Posterior vena cava (tissue), 2 donors: ENCODE measurements at regions of chr9 and their contacts with region 1.

Region 1: GRCh38 chr9:108672475-108673190 is 183.2 kb downstream of the ACTL7B start:
- DNase-seq: no peak

Region 2: DNA sequence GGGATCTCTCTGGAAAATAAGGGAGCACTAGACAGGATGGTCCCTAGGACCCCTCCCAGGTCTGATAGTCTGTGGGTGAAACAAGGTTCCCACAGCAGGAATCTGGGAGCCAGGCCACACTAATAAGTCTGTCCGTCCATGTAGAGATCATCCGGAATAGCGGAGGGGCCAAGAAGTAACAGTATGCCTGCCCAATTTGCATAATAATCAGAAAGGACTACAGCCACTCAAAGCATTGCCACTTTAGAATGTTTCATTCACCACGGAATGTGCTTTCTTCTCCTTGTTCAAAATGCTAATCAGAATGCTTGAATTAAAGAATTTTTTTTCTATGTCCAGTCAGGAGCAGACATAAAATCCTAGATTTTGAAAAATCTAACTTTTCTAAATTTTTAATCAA is 71.7 kb before region 1 on chr9:
- intact Hi-C with region 1: loop called in 1 of 2 experiments (anchors 2 kb)
- DNase-seq: no peak

Region 3: GRCh38 chr9:108811944-108812343 is 139.3 kb after region 1 on chr9:
- intact Hi-C with region 1: no loop called
- DNase-seq: no peak